PC-3 (cell line): ENCODE measurements at regions of chr1 and their contacts with region 1.

Region 1: DNA sequence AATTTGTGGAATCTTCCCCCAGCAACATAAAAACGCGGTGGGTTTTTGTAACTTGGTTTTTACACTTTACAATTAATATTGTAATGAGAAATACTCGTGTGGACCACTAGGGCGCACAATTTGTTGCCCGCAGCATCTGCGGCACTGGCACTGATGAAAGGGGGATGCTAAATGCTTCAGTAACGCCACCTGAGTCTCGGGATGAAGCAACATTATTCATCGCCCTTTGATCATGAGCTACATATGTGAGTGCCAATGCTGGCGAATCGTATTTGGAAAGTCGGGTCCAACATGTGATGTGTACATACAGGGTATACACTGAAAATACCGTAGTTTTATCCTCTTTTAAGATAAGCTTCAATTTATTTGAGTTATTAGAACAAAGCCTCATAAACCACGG is 34.2 kb upstream of the COX20 start:
- DNase-seq: peak; percentile 83
- ATAC-seq: peak; percentile 78
- H3K4me3 ChIP-seq: peak overlapping the region; percentile 27; the same call in 1 of the 2 replicates
- H3K27ac ChIP-seq: no peak overlapping the region
- H3K4me1 ChIP-seq: peaks cover 7% of the 10 kb centered on the region; the same call in 1 of the 2 replicates
- H3K27me3 ChIP-seq: no peaks in the 10 kb centered on the region
- CTCF ChIP-seq: peak; percentile 92

Region 2: GRCh38 chr1:244435562-244436205 is 365.6 kb before region 1 on chr1:
- CTCF ChIA-PET with region 1: no interaction called
- POLR2A ChIA-PET with region 1: no interaction called
- intact Hi-C with region 1: no loop called
- DNase-seq: peak; percentile 81
- ATAC-seq: peak; percentile 72
- H3K4me3 ChIP-seq: peak overlapping the region; percentile 13; the same call in 1 of the 2 replicates
- H3K27ac ChIP-seq: peak overlapping the region; percentile 86
- H3K4me1 ChIP-seq: peaks cover 37% of the 10 kb centered on the region
- H3K27me3 ChIP-seq: no peaks in the 10 kb centered on the region
- CTCF ChIP-seq: no peak

Region 3: DNA sequence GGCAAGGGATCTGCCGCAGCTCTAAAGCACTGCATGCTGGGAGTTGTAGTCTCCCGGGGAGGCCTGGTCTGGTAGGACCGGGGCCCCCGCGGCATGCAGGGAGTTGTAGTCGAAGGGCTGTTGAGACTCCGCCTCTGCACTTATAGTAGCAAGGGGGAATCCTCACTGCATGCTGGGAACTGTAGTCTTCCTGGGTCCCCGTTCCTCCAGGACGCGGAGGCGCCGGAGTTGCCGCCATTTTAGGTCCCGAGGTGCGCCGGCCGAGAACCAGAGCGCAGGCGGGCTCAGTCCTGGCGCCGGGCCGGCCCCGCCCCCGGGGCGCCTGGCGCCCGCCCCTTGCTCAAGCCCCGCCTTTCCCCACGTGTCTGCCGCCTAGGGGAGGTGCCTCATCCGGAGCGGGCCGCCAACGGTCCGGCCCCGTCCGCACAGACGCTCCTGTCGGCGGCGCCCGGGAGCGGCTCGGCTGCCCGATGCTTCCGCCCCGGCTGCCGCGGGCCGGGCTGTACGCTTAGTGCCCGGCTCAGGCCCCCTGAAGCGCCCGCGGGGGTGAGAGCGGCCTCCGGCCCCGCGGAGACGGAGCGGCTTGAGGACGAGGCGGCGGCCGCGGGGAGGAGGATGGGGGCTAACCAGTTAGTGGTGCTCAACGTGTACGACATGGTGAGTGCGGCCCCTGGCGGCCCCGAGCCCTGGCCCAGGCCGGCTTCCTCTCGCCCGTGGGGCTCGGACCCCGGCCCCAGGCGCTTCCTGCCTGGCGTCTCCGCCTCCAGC is 148.4 kb before region 1 on chr1 and contains the start of gene DESI2:
- CTCF ChIA-PET with region 1: no interaction called
- POLR2A ChIA-PET with region 1: no interaction called
- intact Hi-C with region 1: loop called (anchors 1 kb)
- DNase-seq: peak; percentile 99
- ATAC-seq: peak; percentile 93
- H3K4me3 ChIP-seq: peak within 1 kb of the TSS; percentile 91
- H3K27ac ChIP-seq: peak within 1 kb of the TSS; percentile 30
- H3K4me1 ChIP-seq: peaks cover 27% of the 10 kb centered on the region
- H3K27me3 ChIP-seq: no peaks in the 10 kb centered on the region
- CTCF ChIP-seq: peak; percentile 72
- total RNA-seq, gene DESI2: 58.7 and 81.8 TPM in 2 replicates

Region 4: GRCh38 chr1:244730153-244730933 is 70.9 kb before region 1 on chr1:
- CTCF ChIA-PET with region 1: no interaction called
- POLR2A ChIA-PET with region 1: interaction called, 21 read pairs
- intact Hi-C with region 1: no loop called
- DNase-seq: peak; percentile 51
- ATAC-seq: peak; percentile 84
- H3K4me3 ChIP-seq: peak overlapping the region; percentile 60
- H3K27ac ChIP-seq: no peak overlapping the region
- H3K4me1 ChIP-seq: peaks cover 10% of the 10 kb centered on the region
- H3K27me3 ChIP-seq: no peaks in the 10 kb centered on the region
- CTCF ChIP-seq: no peak

Region 5: GRCh38 chr1:244821134-244821533 is 19.9 kb after region 1 on chr1:
- CTCF ChIA-PET with region 1: no interaction called
- POLR2A ChIA-PET with region 1: no interaction called
- intact Hi-C with region 1: loop called (anchors 2 kb)
- DNase-seq: peak; percentile 70
- ATAC-seq: peak; percentile 84
- H3K4me3 ChIP-seq: no peak overlapping the region
- H3K27ac ChIP-seq: no peak overlapping the region
- H3K4me1 ChIP-seq: peaks cover 23% of the 10 kb centered on the region
- H3K27me3 ChIP-seq: no peaks in the 10 kb centered on the region
- CTCF ChIP-seq: no peak

Region 6: DNA sequence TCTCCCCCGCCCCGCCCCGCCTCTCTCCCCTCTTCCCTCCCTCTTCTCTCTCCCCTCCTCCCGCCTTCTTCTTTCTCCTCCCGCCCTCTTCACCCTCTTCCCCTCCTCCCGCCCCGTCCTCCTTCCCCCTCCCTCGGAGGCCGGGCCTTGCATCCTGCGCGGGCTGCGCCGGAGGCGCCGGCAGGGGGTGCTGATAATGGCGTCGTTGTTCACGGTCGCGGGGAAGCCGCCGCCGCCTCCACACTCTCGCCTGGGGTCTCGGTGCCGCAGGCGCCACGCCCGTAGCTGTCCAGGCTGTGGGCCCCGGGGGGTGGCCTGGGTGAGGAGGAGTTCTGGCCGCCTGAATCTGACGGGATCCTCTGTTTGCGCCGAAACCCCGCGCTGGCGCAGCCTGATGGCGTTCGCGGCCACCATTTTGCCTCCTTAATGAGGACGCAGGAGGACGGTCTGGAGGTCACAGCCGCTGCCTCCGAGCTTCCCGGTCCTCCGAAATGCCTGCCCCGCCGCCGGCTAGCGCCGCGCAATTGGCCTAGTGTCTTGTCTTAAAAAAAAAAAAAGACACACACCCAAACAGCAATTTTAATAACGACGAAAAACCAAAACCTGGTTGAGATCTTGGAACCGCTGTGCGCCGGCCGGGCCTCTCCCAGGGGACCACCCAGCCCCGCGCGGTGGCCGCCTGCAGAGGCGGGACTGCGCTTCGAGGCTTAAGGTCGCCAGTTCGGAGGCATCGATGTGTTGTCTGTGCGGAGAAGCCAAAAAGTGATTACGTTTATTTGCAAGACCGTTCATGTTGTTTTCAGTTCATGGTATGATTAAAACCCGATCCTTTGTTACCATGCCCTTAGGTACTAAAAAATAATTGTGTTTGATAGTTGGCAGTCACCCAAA is 169.7 kb after region 1 on chr1:
- CTCF ChIA-PET with region 1: interaction called, 14 read pairs
- POLR2A ChIA-PET with region 1: no interaction called
- intact Hi-C with region 1: loop called (anchors 1 kb)
- DNase-seq: peak; percentile 96
- ATAC-seq: peak; percentile 66
- H3K4me3 ChIP-seq: peak overlapping the region; percentile 74
- H3K27ac ChIP-seq: peak overlapping the region; percentile 95
- H3K4me1 ChIP-seq: peaks cover 17% of the 10 kb centered on the region
- H3K27me3 ChIP-seq: no peaks in the 10 kb centered on the region
- CTCF ChIP-seq: peak; percentile 65